Left cardiac atrium (tissue), 4 donors: ENCODE measurements at regions of chr12 and their contacts with region 1.

Region 1: GRCh38 chr12:124804011-124804621 is 59.5 kb downstream of the SCARB1 start:
- DNase-seq: peak; percentile 57
- ATAC-seq: peak; percentile 85

Region 2: GRCh38 chr12:124898200-124898922 is 94.2 kb after region 1 on chr12:
- intact Hi-C with region 1: loop called in 1 of 2 experiments (anchors 10 kb)
- DNase-seq: no peak
- ATAC-seq: peak; percentile 62 to 82